Activated B cell treated with CpG ODN at 0.5 μM for 24 hours (primary cell): ENCODE measurements at regions of chr16 and their contacts with region 1.

Region 1: DNA sequence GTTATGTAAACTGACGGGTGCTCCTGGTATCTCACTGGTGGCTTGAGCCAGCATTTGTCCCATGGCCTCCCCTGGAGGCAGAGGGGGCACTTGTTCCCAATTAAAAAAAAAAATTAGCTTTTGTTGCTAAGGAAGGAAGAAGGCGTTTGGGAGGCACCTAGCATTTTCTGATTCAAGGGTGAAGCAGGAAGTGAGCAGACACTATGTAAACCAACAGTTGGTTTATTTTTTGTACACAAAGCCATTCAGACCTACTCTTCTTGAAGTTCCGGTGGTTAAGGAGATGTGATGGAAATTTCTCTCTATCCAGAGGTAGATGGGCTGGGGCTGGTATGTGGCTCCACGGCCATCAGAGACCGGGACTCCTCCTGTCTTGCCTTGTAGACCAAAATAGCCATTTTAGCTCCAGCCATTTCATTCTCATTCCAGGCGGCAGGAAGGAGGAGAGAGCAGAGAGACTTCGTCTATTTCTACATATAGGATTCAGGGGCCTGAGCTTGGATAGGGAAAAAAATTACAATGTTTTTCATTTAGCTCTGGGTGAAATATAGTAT is 103.0 kb downstream of the SNX29 start:
- DNase-seq: no peak
- ATAC-seq: no peak
- H3K4me3 Mint-ChIP-seq: no peak overlapping the region
- H3K27ac Mint-ChIP-seq: peak overlapping the region; percentile 88
- H3K4me1 Mint-ChIP-seq: peaks cover 58% of the 10 kb centered on the region
- H3K27me3 Mint-ChIP-seq: no peaks in the 10 kb centered on the region
- CTCF ChIP-seq: no peak

Region 2: GRCh38 chr16:12089492-12090150 is 10.1 kb after region 1 on chr16:
- CTCF ChIA-PET with region 1: interaction called, 13 read pairs
- POLR2A ChIA-PET with region 1: interaction called, 4 read pairs
- intact Hi-C with region 1: loop called (anchors 1 kb)
- DNase-seq: peak; percentile 37
- ATAC-seq: peak; percentile 98
- H3K4me3 Mint-ChIP-seq: peak overlapping the region; percentile 74
- H3K27ac Mint-ChIP-seq: peak overlapping the region; percentile 81
- H3K4me1 Mint-ChIP-seq: peaks cover 38% of the 10 kb centered on the region
- H3K27me3 Mint-ChIP-seq: no peaks in the 10 kb centered on the region
- CTCF ChIP-seq: no peak